ENCODE measurements at regions of chr19 and their contacts with region 1.

Region 1: GRCh38 chr19:8252922-8253589 is 43.9 kb downstream of the CERS4 start:
- DNase-seq: peak; percentile 66 to 91 (median 84)
- ATAC-seq: peak; percentile 93
- H3K4me3 ChIP-seq: no peak overlapping the region
- H3K4me3 Mint-ChIP-seq: no peak overlapping the region
- H3K27ac ChIP-seq: no peak overlapping the region
- H3K27ac Mint-ChIP-seq: no peak overlapping the region
- H3K4me1 ChIP-seq: peaks cover 3% of the 10 kb centered on the region
- H3K4me1 Mint-ChIP-seq: peaks cover 10% of the 10 kb centered on the region
- H3K27me3 ChIP-seq: no peaks in the 10 kb centered on the region
- H3K27me3 Mint-ChIP-seq: no peaks in the 10 kb centered on the region
- CTCF ChIP-seq: peak; percentile 85

Region 2: DNA sequence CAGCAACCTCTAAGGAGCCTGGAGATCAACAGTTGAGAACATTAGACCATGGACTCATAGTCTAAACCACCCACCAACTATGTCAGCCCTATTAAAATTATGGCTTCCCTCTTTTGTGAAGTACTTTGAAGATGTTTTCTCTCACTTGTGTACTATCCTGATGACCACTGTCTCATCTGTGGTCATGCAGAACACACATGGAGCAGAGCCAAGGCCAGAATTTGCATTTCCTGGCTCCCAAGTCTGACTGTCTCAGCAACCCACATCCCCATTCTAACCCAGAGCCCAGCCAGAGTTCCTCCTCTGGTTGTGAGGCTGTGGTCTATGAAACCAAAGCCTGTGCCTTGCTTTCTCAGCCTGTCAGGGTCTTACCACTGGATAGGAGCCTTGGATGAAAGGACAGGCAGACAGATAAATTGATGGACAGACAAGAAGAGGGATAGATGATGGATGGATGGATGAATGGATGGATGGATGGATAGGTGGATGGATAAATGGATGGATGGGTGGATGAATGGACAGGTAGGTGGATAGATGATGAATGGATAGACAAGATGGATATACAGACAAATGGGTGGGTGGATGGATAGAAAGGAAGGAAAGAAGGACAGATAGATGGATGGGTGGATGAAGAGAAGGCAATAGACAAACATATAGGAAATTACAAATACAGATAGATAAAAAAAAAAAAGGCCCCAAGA is 1148.2 kb before region 1 on chr19:
- CTCF ChIA-PET with region 1: no interaction called
- POLR2A ChIA-PET with region 1: no interaction called
- intact Hi-C with region 1: loop called in 1 of 2 experiments (anchors 10 kb)
- DNase-seq: no peak
- ATAC-seq: no peak
- H3K4me3 ChIP-seq: no peak overlapping the region
- H3K4me3 Mint-ChIP-seq: no peak overlapping the region
- H3K27ac ChIP-seq: no peak overlapping the region
- H3K27ac Mint-ChIP-seq: no peak overlapping the region
- H3K4me1 ChIP-seq: peaks cover 8% of the 10 kb centered on the region
- H3K4me1 Mint-ChIP-seq: peaks cover 15% of the 10 kb centered on the region
- H3K27me3 ChIP-seq: no peaks in the 10 kb centered on the region
- H3K27me3 Mint-ChIP-seq: no peaks in the 10 kb centered on the region
- CTCF ChIP-seq: no peak

Region 3: GRCh38 chr19:7852851-7853769 is 399.9 kb before region 1 on chr19:
- CTCF ChIA-PET with region 1: no interaction called
- POLR2A ChIA-PET with region 1: no interaction called
- intact Hi-C with region 1: loop called in 1 of 2 experiments (anchors 1 kb)
- DNase-seq: peak; percentile 37 to 80 (median 69)
- ATAC-seq: peak; percentile 84
- H3K4me3 ChIP-seq: no peak overlapping the region
- H3K4me3 Mint-ChIP-seq: no peak overlapping the region
- H3K27ac ChIP-seq: no peak overlapping the region
- H3K27ac Mint-ChIP-seq: no peak overlapping the region
- H3K4me1 ChIP-seq: peaks cover 5% of the 10 kb centered on the region
- H3K4me1 Mint-ChIP-seq: peaks cover 2% of the 10 kb centered on the region
- H3K27me3 ChIP-seq: peaks cover 0 to 10% of the 10 kb centered on the region in 2 experiments
- H3K27me3 Mint-ChIP-seq: peaks cover 2% of the 10 kb centered on the region
- CTCF ChIP-seq: peak; percentile 85

Region 4: GRCh38 chr19:8017808-8018207 is 235.2 kb before region 1 on chr19:
- CTCF ChIA-PET with region 1: interaction called, 5 read pairs
- POLR2A ChIA-PET with region 1: no interaction called
- intact Hi-C with region 1: loop called in 1 of 2 experiments (anchors 2 kb)
- DNase-seq: peak in 7 of 9 experiments; percentile 26 to 68 (median 54)
- ATAC-seq: peak; percentile 91
- H3K4me3 ChIP-seq: no peak overlapping the region
- H3K4me3 Mint-ChIP-seq: no peak overlapping the region
- H3K27ac ChIP-seq: no peak overlapping the region
- H3K27ac Mint-ChIP-seq: no peak overlapping the region
- H3K4me1 ChIP-seq: no peaks in the 10 kb centered on the region
- H3K4me1 Mint-ChIP-seq: peaks cover 7% of the 10 kb centered on the region
- H3K27me3 ChIP-seq: no peaks in the 10 kb centered on the region
- H3K27me3 Mint-ChIP-seq: no peaks in the 10 kb centered on the region
- CTCF ChIP-seq: no peak

Region 5: DNA sequence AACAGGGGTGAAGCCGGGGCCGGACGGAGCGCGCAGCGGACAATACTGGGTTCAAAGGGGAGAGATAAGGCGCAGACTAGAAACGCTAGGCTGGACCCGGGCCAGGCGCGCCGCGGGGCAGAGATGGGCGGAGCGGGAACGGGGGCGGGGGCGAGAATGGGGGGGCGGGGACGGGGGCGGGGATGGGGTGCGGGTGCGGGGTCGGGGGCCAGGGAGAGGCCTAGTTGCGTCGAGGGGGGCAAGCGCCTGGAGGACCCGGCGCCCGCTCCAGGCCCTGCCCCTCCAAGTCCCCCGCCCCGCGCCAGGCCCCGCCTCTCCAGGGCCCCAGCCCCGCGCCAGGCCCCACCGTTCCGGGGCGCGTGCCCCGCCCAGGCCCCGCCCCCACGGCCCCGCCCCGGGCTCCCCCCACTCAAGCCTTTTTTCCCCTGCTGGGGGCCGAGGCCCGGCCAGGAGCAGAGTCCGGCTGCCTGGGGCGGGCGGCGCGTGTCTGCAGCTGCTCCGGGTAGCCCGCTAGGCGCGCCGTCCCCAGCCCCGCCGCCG is 44.1 kb before region 1 on chr19 and contains the start of gene CERS4:
- CTCF ChIA-PET with region 1: interaction called, 7 read pairs
- POLR2A ChIA-PET with region 1: no interaction called
- intact Hi-C with region 1: loop called in 1 of 2 experiments (anchors 2 kb)
- DNase-seq: peak; percentile 43 to 87 (median 75)
- ATAC-seq: peak; percentile 85
- H3K4me3 ChIP-seq: peak within 1 kb of the TSS; percentile 75 to 86
- H3K4me3 Mint-ChIP-seq: peak within 1 kb of the TSS; percentile 85
- H3K27ac ChIP-seq: peak within 1 kb of the TSS; percentile 51 to 72
- H3K27ac Mint-ChIP-seq: peak within 1 kb of the TSS; percentile 87
- H3K4me1 ChIP-seq: peaks cover 22% of the 10 kb centered on the region
- H3K4me1 Mint-ChIP-seq: peaks cover 26% of the 10 kb centered on the region
- H3K27me3 ChIP-seq: no peaks in the 10 kb centered on the region
- H3K27me3 Mint-ChIP-seq: no peaks in the 10 kb centered on the region
- CTCF ChIP-seq: no peak
- total RNA-seq, gene CERS4: 6.9 to 7.2 TPM

Region 6: GRCh38 chr19:8451885-8452284 is 198.8 kb after region 1 on chr19:
- CTCF ChIA-PET with region 1: no interaction called
- POLR2A ChIA-PET with region 1: no interaction called
- intact Hi-C with region 1: no loop called
- DNase-seq: peak in 3 of 9 experiments; percentile 19 to 37 (median 31)
- ATAC-seq: peak; percentile 49
- H3K4me3 ChIP-seq: no peak overlapping the region
- H3K4me3 Mint-ChIP-seq: peak overlapping the region; percentile 58
- H3K27ac ChIP-seq: no peak overlapping the region
- H3K27ac Mint-ChIP-seq: peak overlapping the region; percentile 34
- H3K4me1 ChIP-seq: peaks cover 63% of the 10 kb centered on the region
- H3K4me1 Mint-ChIP-seq: peaks cover 87% of the 10 kb centered on the region
- H3K27me3 ChIP-seq: no peaks in the 10 kb centered on the region
- H3K27me3 Mint-ChIP-seq: no peaks in the 10 kb centered on the region
- CTCF ChIP-seq: no peak